Ovary (tissue), 10 donors: ENCODE measurements at regions of chr12 and their contacts with region 1.

Region 1: DNA sequence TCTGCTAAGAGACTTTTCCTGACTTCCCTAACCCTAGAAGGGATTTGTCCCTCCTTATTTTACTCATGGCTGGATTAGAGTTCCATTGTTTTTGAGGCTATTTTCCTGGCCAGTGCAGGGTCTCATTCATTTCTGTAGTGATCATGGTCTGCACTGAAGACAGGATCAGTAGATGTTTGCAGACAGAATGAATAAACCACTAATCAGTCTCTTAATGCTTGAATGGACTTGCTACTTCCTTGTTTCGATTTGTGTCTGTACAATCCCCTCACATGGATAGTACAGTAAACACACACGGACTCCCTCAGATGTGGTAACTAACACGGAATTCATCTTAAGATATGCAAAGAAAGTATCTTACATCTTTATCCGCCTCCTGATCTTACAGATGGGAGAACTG is 102.6 kb upstream of the PRB2 start:
- DNase-seq: no peak
- H3K4me3 ChIP-seq: no peak overlapping the region
- H3K27ac ChIP-seq: no peak overlapping the region
- H3K4me1 ChIP-seq: peaks cover 1% of the 10 kb centered on the region
- H3K27me3 ChIP-seq: no peaks in the 10 kb centered on the region
- CTCF ChIP-seq: no peak
- EP300 ChIP-seq: no peak
- POLR2A ChIP-seq: no peak

Region 2: DNA sequence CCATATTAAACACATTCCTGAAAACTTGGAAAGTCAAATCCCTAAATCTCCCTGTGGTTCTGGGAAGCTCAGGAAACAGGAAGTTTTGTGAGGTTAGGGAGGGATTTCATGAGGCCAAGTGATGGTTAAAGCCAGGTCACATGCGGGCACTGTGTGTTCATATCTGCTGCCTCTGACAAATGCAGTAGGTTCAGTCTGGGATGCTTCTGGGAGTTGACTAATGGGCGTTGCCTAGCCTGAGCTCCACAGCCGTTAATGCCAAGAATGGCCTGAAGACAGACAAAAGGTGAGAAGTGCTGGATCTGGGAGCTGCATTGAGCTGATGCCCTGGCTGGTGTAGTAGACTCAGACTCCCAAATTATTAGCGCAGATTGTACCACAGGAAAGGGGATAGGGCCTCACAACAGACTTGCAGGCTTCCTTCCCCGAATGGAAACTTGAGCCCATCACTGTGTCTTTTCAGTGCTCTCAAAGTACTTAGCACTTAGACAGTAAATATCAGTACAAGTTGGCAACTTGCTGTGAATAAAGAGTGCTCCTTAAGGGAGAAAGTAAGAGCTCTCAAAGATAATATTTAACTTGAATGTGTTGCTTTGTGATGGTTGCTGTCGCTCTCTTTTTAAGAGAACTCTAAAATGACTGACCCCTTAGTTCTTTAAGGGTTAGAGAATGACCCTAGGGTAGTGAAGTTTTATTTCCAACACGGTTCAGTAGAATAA is 1588.1 kb after region 1 on chr12:
- intact Hi-C with region 1: loop called in 1 of 4 experiments (anchors 10 kb)
- DNase-seq: no peak
- H3K4me3 ChIP-seq: no peak overlapping the region
- H3K27ac ChIP-seq: no peak overlapping the region
- H3K4me1 ChIP-seq: no peaks in the 10 kb centered on the region
- H3K27me3 ChIP-seq: no peaks in the 10 kb centered on the region
- CTCF ChIP-seq: no peak
- EP300 ChIP-seq: no peak
- POLR2A ChIP-seq: no peak